ENCODE measurements at regions of chr14 and their contacts with region 1.

Region 1: DNA sequence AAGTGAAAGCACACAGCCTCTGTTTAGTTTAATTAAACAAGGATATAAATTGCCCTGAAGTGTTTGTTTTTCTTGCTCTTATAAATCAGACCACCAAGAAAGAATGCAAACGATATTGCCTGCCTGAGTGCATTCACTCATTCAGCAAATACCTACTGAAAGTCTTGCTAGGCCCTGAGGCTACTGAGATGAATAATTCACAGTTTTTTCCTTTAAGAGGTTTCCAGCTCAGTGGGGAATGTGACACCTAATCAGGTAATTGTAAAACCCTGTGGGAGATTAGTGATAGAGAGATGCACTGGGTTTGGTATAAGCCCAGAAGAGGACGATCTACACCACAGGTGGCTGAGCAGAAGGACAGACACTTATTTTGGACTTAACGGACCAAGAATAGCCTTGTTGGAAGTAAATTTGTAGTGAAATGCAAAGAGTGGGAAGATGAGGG is 151.4 kb downstream of the SLC35F4 start:
- DNase-seq: no peak
- ATAC-seq: no peak

Region 2: DNA sequence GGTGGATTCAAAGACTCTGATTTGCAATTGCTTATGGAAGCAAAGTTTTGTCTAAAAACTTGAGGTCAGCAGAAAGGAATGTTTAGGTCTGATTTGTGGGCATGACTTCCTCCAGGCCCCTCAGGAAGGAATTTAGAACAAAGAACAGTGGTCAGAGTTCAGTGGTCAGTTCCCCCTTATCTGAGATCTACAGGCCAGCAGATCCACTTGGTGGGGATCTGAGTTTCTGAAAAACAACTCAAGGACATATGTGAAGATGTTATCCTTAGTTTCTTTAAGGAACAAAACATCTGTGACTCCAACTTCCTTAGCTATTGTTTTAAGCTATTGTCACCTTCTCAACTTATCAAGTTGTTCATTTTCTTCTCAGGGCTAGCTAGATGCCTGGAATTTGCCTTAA is 352.1 kb before region 1 on chr14:
- intact Hi-C with region 1: no loop called
- DNase-seq: no peak
- ATAC-seq: no peak

Region 3: GRCh38 chr14:57865403-57866198 is 151.1 kb after region 1 on chr14 and contains the start of gene SLC35F4:
- intact Hi-C with region 1: loop called (anchors 10 kb)
- DNase-seq: peak; percentile 35
- ATAC-seq: peak; percentile 78 to 88
- total RNA-seq, gene SLC35F4: not detected

Region 4: DNA sequence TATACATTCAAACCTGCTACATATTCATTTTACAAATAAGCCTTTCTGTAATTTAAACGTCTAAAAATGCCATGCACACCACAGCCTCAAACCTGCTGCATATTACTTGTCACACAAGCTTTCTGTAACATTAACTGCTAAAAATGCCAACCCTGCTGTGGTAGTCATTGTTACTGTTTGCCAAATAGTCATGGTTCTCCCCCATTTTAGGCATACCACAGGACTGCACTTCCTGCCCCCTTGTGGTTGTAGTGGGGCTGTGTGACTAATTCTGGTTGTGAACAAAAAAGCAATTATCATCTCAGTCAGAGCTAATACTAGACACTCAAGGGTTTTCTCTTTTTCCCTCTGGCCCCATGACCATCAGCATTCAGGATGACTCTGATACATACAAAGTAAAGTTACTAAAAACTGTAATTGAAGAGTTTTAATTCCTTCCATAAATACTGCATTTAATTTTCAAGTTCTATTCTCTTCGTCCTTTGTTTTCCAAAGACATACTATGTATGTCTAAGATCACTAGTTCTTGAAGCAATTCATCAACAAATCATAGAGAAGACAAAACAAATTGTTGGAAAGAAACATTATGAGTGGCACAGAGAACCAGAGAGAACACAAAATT is 157.1 kb after region 1 on chr14:
- intact Hi-C with region 1: loop called (anchors 10 kb)
- DNase-seq: no peak
- ATAC-seq: peak in 1 of 2 donors; percentile 34

Region 5: GRCh38 chr14:57909626-57910025 is 195.1 kb after region 1 on chr14:
- intact Hi-C with region 1: no loop called
- DNase-seq: no peak
- ATAC-seq: no peak